ENCODE measurements at regions of chr20 and their contacts with region 1.

Region 1: GRCh38 chr20:59055295-59055694 is 12.7 kb upstream of the PRELID3B start:
- DNase-seq: no peak
- ATAC-seq: no peak
- H3K4me3 Mint-ChIP-seq: no peak overlapping the region
- H3K27ac Mint-ChIP-seq: no peak overlapping the region
- H3K4me1 Mint-ChIP-seq: no peaks in the 10 kb centered on the region
- H3K27me3 Mint-ChIP-seq: peaks cover 31% of the 10 kb centered on the region
- CTCF ChIP-seq: no peak

Region 2: GRCh38 chr20:59074445-59074844 is 19.1 kb after region 1 on chr20:
- CTCF ChIA-PET with region 1: interaction called, 3 read pairs
- POLR2A ChIA-PET with region 1: no interaction called
- intact Hi-C with region 1: loop called (anchors 2 kb)
- DNase-seq: no peak
- ATAC-seq: no peak
- H3K4me3 Mint-ChIP-seq: no peak overlapping the region
- H3K27ac Mint-ChIP-seq: no peak overlapping the region
- H3K4me1 Mint-ChIP-seq: peaks cover 31% of the 10 kb centered on the region
- H3K27me3 Mint-ChIP-seq: peaks cover 18% of the 10 kb centered on the region
- CTCF ChIP-seq: no peak

Region 3: DNA sequence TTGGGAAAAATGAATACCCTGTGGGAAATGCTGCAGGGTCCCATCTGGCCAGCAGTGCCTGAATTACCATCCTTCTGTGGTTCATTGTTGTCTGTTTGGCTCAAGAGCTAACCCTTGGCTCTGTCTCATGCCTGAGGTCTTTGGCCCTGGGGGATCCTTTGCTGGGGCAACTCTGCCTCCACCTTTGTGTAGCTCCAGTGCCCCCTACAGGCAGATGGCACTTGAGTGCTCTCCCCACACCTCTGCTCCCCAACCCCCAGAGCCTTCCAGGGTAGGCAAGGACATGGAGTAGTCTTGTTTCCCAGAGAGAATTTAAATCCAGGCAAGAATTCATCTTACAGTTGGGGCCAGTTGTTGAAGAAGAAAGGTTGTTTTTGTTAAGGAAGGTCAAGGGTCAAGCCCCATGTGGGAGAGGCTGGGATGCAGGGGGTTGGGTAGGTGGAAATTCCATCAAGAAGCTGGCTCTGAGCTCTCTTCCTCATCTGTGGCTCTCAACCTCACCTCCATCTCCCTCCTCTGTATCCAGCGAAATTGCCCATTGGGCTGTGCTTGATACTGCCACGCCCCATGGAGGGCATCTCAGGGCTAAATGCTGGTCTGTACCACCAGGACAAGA is 152.6 kb after region 1 on chr20:
- CTCF ChIA-PET with region 1: interaction called, 13 read pairs
- POLR2A ChIA-PET with region 1: no interaction called
- intact Hi-C with region 1: loop called (anchors 1 kb)
- DNase-seq: peak; percentile 59
- ATAC-seq: peak; percentile 100
- H3K4me3 Mint-ChIP-seq: no peak overlapping the region
- H3K27ac Mint-ChIP-seq: peak overlapping the region; percentile 30
- H3K4me1 Mint-ChIP-seq: peaks cover 6% of the 10 kb centered on the region
- H3K27me3 Mint-ChIP-seq: no peaks in the 10 kb centered on the region
- CTCF ChIP-seq: no peak

Region 4: GRCh38 chr20:59269411-59270025 is 214.2 kb after region 1 on chr20:
- CTCF ChIA-PET with region 1: no interaction called
- POLR2A ChIA-PET with region 1: no interaction called
- intact Hi-C with region 1: no loop called
- DNase-seq: no peak
- ATAC-seq: no peak
- H3K4me3 Mint-ChIP-seq: no peak overlapping the region
- H3K27ac Mint-ChIP-seq: no peak overlapping the region
- H3K4me1 Mint-ChIP-seq: no peaks in the 10 kb centered on the region
- H3K27me3 Mint-ChIP-seq: peaks cover 39% of the 10 kb centered on the region
- CTCF ChIP-seq: no peak

Region 5: DNA sequence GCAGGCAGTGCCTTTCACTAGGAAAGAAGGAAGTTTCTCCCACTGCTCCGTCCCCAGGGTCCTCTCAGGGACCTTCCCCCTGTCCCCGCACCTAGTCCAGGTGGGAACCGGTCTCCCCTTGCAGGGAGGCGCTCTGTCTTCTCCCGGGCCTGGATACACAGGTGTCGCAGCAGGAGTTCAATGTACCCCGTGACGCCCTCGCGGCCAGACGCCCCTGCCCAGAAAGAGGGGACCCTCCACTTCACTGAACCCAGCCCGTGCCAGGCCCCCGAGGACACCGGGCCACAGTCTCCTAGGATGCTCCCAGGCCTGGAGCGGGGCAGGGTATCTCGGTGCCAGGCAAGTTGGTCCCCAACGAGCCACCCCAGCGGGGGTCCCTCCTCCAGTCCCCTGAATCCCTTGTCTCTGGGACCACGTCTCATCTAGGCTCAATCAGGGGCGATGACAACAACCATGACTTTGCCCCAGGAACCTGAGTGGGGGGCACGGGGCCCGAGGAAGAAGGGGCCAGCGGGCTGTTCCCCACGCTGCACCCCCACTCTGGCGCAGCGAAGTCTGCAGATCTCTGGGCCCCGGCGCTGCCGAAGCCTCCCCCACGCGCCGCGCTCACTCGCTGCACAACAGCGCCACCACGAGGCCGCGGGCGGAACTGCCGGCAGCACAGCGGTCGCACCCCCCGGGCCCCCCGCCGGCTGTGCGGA is 348.1 kb after region 1 on chr20:
- CTCF ChIA-PET with region 1: no interaction called
- POLR2A ChIA-PET with region 1: no interaction called
- intact Hi-C with region 1: loop called (anchors 2 kb)
- DNase-seq: peak; percentile 52
- ATAC-seq: peak; percentile 57
- H3K4me3 Mint-ChIP-seq: no peak overlapping the region
- H3K27ac Mint-ChIP-seq: no peak overlapping the region
- H3K4me1 Mint-ChIP-seq: peaks cover 4% of the 10 kb centered on the region
- H3K27me3 Mint-ChIP-seq: peaks cover 30% of the 10 kb centered on the region
- CTCF ChIP-seq: peak; percentile 47

Measured in activated B cell treated with CpG ODN at 0.5 μM for 24 hours (primary cell).